H1 (cell line): ENCODE measurements at regions of chr3 and their contacts with region 1.

Region 1: DNA sequence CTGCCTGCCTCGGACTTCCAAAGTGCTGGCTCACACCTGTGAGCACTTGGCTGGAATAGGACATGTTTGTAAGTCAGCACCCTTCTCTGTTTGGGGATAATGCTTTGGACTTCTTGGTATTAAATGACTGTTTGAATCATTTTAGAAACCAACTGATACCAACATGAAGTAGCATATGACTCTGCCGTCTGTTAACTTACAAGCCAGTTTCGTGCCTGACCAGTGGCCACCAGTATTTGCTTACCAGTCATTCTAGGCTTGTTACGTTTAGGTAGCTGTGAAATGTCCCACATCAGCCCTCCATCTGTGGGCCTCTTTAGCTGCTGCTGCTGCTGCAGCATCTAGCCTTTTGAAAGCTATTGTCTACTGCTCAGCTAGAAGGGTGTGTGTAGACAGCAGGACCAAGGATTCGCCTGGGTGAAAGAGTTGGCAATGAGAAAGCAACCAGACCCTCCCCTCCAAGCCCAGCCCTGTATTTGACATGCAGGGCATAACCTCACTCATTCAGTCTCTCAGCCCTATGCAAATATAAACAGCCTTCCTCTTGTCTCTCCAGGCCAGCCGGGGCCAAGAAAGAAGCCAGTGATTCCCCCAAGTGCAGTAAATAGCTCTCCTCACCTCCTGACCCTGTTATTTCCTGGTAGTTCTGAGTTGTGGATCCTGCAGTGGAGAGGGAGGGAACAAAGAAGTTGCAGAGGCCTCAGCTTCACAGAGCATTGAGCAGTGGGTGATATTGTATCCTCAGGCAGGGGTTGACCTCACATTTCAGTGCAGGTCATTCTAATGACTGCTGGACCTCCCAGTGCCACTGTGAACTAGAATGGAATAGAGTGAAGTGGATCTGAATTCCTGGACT is 51.0 kb downstream of the NKIRAS1 start:
- DNase-seq: peak in 1 of 2 experiments; percentile 21
- H3K4me3 ChIP-seq: no peak overlapping the region
- H3K27ac ChIP-seq: no peak overlapping the region
- H3K4me1 ChIP-seq: peaks cover 5 to 16% (median 10%) of the 10 kb centered on the region in 4 experiments
- H3K27me3 ChIP-seq: peaks cover 0 to 1% (median 0%) of the 10 kb centered on the region in 4 experiments; a peak in 1 of 7 replicates
- CTCF ChIP-seq: no peak
- EP300 ChIP-seq: no peak
- POLR2A ChIP-seq: 0 out of 3 replicates have a peak, but pooled peaks of 1 of the 2 experiments have one; percentile 14
- RAD21 ChIP-seq: 0 out of 4 replicates have a peak, but pooled peaks of 1 of the 2 experiments have one; percentile 5

Region 2: DNA sequence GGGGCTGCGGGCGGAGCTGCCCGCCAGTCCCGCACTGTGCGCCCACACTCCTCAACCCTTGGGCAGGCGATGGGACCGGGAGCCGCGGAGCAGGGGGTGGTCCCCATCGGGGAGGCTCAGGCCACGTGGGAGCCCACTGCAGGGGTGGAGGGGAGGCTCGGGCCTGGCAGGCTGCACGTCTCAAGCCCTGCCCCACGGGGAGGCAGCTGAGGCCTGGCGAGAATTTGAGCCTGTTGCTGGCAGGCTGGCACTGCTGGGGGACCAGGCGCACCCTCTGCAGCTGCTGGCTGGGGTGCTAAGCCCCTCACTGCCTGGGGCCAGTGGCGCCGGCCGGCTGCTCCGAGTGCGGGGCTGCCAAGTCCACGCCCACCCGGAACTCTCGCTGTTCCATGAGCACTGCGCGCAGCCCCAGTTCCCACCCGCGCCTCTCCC is 16.7 kb after region 1 on chr3:
- CTCF ChIA-PET with region 1: interaction called, 10 read pairs
- POLR2A ChIA-PET with region 1: interaction called, 6 read pairs
- DNase-seq: no peak
- H3K4me3 ChIP-seq: no peak overlapping the region
- H3K27ac ChIP-seq: no peak overlapping the region
- H3K4me1 ChIP-seq: no peaks in the 10 kb centered on the region
- H3K27me3 ChIP-seq: no peaks in the 10 kb centered on the region
- CTCF ChIP-seq: no peak
- EP300 ChIP-seq: no peak
- POLR2A ChIP-seq: no peak
- RAD21 ChIP-seq: no peak

Region 3: GRCh38 chr3:23899354-23899753 is 33.5 kb after region 1 on chr3:
- CTCF ChIA-PET with region 1: no interaction called
- POLR2A ChIA-PET with region 1: no interaction called
- DNase-seq: no peak
- H3K4me3 ChIP-seq: no peak overlapping the region
- H3K27ac ChIP-seq: no peak overlapping the region
- H3K4me1 ChIP-seq: no peaks in the 10 kb centered on the region
- H3K27me3 ChIP-seq: no peaks in the 10 kb centered on the region
- CTCF ChIP-seq: no peak
- EP300 ChIP-seq: no peak
- POLR2A ChIP-seq: no peak
- RAD21 ChIP-seq: no peak